Mucosa of descending colon (tissue), 3 donors: ENCODE measurements at regions of chr1 and their contacts with region 1.

Region 1: DNA sequence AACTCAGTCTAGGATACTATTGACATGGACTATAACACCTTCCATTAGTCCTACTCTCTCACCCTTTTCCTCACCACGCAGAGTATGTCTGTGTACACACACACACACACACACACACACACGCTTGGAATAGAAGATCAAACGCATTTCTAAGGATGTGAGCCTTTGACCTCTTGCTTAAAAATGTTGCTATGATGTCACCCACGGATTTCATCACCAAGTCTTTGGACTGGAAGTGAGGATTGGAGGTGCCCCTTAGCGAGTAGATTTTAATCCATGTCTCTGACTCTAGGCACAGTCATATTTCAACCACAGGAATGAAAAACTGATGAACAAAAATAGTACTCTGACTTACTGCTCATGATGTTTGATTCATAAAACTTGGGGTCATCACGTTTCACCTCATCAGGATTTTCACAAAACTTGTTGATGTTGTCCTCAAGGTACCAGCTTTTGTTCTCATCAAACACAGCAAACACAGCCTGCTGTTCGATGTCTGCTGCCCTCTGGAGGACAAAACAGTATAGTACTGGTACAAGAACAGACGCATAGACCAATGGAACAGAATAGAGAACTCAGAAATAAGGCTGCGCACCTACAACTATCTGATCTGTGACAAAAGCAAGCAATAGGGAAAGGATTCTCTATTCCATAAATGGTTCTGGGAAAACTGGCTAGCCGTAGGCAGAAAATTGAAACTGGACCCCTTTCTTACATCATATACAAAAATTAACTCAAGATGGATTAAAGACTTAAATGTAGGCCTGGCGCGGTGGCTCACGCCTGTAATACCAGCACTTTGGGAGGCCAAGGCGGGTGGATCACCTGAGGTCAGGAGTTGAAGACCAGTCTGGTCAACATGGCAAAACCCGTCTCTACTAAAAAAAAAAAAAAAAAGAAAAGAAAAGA is 39.9 kb downstream of the F5 start:
- DNase-seq: peak in 1 of 3 donors; percentile 88
- ATAC-seq: peak; percentile 87
- H3K4me3 ChIP-seq: no peak overlapping the region
- H3K4me1 ChIP-seq: no peaks in the 10 kb centered on the region
- CTCF ChIP-seq: peak; percentile 48

Region 2: GRCh38 chr1:168603501-168604110 is 942.7 kb before region 1 on chr1:
- intact Hi-C with region 1: loop called in 1 of 2 experiments (anchors 10 kb)
- DNase-seq: peak; percentile 65 to 87 (median 85)
- ATAC-seq: peak; percentile 94
- H3K4me3 ChIP-seq: no peak overlapping the region
- H3K4me1 ChIP-seq: peaks cover 2% of the 10 kb centered on the region
- CTCF ChIP-seq: peak; percentile 62

Region 3: GRCh38 chr1:169387383-169387782 is 159.0 kb before region 1 on chr1:
- intact Hi-C with region 1: loop called in 1 of 2 experiments (anchors 10 kb)
- DNase-seq: no peak
- ATAC-seq: peak; percentile 75
- H3K4me3 ChIP-seq: no peak overlapping the region
- H3K4me1 ChIP-seq: no peaks in the 10 kb centered on the region
- CTCF ChIP-seq: no peak

Region 4: GRCh38 chr1:169466259-169467230 is 79.8 kb before region 1 on chr1:
- intact Hi-C with region 1: loop called (anchors 5 kb)
- DNase-seq: peak in 1 of 3 donors; percentile 67
- ATAC-seq: no peak
- H3K4me3 ChIP-seq: no peak overlapping the region
- H3K4me1 ChIP-seq: no peaks in the 10 kb centered on the region
- CTCF ChIP-seq: no peak

Region 5: DNA sequence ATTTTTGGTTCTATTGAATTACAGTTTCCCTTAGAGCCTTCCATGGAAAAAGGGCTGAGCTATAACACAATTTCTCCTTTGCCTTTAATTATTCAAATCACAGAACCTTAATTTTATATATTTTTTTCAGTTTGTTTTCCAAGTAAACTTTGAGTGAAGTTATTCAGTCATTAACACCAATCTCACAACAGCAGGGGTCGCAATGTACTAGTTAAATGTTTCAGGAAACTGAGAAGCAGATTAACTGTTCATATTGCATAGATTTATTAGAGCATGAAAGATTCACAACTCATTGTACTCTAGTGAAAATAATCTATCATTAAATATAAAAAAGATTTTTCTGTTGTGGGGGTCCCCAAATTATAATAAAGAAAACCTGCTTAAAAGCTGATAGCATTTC is 464.1 kb after region 1 on chr1:
- intact Hi-C with region 1: no loop called
- DNase-seq: peak in 1 of 3 donors; percentile 83
- ATAC-seq: no peak
- H3K4me3 ChIP-seq: no peak overlapping the region
- H3K4me1 ChIP-seq: no peaks in the 10 kb centered on the region
- CTCF ChIP-seq: no peak